PC-9 (cell line): ENCODE measurements at regions of chr4 and their contacts with region 1.

Region 1: DNA sequence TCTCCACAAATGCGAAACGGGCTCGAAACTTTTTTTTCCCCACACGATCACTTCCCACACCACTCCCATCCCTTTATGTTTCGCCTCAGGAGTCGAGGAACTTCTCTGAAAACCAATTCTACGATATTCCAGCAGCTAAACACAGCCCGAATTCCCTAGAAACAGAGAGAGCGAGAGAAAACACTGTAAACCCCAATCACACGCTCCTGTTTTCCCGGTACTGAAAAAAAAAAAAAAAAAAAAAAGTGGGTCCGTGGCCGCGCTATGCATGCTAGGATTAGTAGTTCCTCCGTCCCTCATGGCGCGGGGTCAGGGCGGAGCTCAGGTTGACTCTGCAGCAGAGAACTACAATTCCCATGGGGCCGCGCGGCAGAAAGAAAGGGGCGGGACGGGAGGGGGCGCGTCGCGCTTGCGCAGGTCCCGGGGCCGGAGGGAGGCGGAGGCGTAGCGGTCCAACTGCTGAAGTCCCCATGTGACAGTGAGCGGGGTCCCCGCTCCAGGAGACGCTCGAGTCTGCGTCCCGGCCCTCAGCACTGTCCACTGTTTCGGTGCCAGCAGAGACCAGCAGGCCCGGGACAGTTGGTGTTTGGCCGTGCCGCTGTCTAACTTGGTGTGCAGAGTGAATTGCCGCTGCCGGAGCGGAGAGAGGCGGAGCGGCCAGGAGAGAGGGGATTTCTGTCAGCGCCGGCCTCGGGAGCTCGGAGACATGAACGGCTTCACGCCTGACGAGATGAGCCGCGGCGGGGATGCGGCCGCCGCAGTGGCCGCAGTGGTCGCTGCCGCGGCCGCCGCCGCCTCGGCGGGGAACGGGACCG is at the start of gene SAP30:
- DNase-seq: peak; percentile 82 to 93
- H3K4me3 ChIP-seq: peak within 1 kb of the TSS; percentile 82
- H3K27ac ChIP-seq: peak within 1 kb of the TSS; percentile 59
- H3K4me1 ChIP-seq: no peaks in the 10 kb centered on the region
- H3K27me3 ChIP-seq: no peaks in the 10 kb centered on the region
- CTCF ChIP-seq: no peak
- total RNA-seq, gene SAP30: 8.0 and 11.4 TPM in 2 replicates

Region 2: DNA sequence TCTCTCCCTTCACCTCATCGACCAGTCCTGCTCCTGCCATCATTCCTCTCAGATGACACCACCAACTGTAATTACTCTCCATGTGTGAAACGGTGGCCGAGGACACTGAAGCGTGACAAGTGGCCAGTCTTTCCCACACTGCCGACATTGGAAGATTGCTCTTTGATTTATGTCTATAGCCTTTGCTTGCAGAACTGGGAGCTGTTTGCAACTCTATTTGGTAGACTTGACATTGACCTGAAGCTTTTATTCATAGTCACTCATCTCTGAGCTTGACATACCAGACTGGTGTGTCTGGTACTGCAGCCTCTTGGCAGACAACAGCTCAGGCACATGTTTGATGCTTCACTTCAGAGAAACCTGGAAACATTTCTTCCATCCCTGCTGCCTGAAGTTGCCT is 323.9 kb before region 1 on chr4:
- CTCF ChIA-PET with region 1: no interaction called
- POLR2A ChIA-PET with region 1: interaction called, 33 read pairs
- intact Hi-C with region 1: no loop called
- DNase-seq: no peak
- H3K4me3 ChIP-seq: no peak overlapping the region
- H3K27ac ChIP-seq: no peak overlapping the region
- H3K4me1 ChIP-seq: no peaks in the 10 kb centered on the region
- H3K27me3 ChIP-seq: no peaks in the 10 kb centered on the region
- CTCF ChIP-seq: no peak

Region 3: DNA sequence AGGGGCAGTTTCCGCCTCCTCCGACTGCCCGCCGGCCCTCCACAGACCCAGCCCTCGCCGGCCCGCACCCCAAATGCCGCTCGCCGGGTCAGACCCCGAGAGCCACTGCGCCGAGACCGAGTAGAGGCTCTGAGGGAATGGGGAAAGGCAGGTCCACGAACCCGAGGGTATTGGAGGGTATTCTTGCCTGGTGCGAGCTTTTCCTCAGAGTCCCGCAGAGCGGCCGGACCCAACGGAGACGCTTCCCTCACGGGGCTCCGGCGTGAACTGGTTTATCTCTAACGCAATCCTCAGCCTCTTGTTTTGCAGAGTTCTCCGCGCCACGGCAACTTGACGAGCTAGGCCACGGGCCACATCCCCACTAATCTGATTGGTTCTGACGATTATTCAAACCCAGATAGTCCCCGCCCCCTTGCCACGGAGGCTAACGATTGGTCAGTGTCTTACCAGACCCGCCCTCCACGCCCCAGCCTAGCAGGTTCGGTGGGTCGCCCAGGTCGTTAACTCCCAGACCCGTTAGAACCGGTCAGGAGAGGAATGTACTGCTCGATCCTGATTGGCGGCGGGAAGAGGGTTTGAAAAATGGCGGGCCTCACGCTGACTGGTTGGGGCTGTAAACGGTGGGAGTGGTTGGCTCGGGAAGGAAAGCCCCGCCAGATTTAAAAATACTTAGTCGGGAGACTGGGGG is 36.5 kb before region 1 on chr4 and contains the start of gene HMGB2:
- CTCF ChIA-PET with region 1: no interaction called
- POLR2A ChIA-PET with region 1: interaction called, 7 read pairs
- intact Hi-C with region 1: loop called (anchors 1 kb)
- DNase-seq: peak; percentile 96 to 99
- H3K4me3 ChIP-seq: peak within 1 kb of the TSS; percentile 96
- H3K27ac ChIP-seq: peak within 1 kb of the TSS; percentile 79
- H3K4me1 ChIP-seq: peaks cover 25% of the 10 kb centered on the region
- H3K27me3 ChIP-seq: no peaks in the 10 kb centered on the region
- CTCF ChIP-seq: no peak
- total RNA-seq, gene HMGB2: 202 and 213 TPM in 2 replicates

Region 4: GRCh38 chr4:173357939-173358338 is 12.7 kb before region 1 on chr4:
- CTCF ChIA-PET with region 1: interaction called, 7 read pairs
- POLR2A ChIA-PET with region 1: no interaction called
- intact Hi-C with region 1: loop called (anchors 2 kb)
- DNase-seq: no peak
- H3K4me3 ChIP-seq: no peak overlapping the region
- H3K27ac ChIP-seq: no peak overlapping the region
- H3K4me1 ChIP-seq: no peaks in the 10 kb centered on the region
- H3K27me3 ChIP-seq: no peaks in the 10 kb centered on the region
- CTCF ChIP-seq: no peak